ENCODE measurements at regions of chr16 and their contacts with region 1.

Region 1: DNA sequence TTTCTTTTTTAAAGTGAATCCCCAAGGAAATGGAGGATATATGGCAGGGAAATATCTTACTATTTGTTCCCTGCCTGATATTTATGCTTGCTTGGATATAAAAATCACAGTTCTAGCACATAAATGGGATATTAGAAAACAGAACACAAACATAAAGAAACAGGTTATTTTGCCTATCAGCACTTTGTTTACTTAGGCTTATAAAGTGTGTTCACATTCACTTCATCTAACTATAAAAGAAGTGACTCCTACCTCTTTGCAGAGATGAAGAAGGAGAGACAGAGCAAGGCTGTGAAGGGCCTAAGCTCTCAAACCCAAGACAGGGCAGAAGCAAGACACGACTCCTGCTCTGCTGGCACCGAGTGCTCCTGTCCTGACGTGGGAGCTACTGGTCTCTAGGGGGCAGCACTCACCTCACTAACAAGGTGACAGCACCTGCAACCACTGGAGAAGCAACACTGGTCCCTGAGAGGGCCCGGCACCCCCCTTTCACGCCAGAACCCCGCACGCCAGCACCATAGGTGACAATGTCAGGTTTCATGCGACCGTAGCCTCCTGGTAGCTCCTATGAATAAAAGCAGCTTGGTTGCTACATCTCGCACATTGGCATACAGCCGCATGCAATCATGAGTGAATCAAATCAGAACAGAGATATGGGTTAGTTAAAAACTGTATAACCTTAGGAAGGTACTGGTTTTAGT is 32.0 kb downstream of the MBTPS1 start:
- DNase-seq: peak; percentile 53
- H3K4me3 Mint-ChIP-seq: no peak overlapping the region
- H3K27ac Mint-ChIP-seq: no peak overlapping the region
- H3K4me1 Mint-ChIP-seq: peaks cover 43% of the 10 kb centered on the region
- H3K27me3 Mint-ChIP-seq: no peaks in the 10 kb centered on the region

Region 2: GRCh38 chr16:84098936-84099335 is 14.2 kb after region 1 on chr16:
- intact Hi-C with region 1: loop called (anchors 1 kb)
- DNase-seq: no peak
- H3K4me3 Mint-ChIP-seq: no peak overlapping the region
- H3K27ac Mint-ChIP-seq: no peak overlapping the region
- H3K4me1 Mint-ChIP-seq: peaks cover 15% of the 10 kb centered on the region
- H3K27me3 Mint-ChIP-seq: no peaks in the 10 kb centered on the region

Region 3: DNA sequence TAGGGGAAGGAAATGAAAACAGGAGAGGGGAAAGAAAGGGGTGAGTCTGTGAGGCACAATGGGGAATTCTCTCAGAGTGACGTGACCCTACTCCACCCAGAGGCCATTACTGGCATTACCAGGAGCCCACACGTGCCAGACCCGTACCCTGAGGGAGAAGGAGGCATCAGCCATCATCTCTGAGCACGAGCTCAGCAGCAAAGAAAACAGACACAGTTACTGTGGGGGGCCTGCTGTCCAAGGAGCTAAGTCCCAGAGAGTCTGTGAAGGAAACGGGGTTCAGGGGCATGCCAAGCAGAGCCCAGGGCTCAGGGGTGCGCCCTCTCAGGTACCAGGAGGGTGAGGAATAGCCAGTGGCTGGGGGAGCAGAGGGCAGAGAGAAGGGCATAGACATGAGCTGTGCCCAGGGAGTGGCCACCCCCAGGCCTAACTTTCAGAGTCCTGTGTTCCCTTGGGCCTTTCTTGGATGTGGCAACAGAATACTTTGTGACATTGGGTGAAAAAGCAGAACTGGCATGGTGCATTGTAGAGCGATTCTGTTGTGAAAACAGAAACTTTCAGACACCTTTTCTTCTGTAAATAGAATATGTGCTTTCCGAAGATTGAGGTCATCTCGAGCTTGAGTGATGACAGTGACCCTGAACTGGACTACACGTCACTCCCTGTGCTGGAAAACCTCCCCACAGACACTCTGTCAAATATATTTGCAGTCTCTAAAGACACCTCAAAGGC is 90.8 kb after region 1 on chr16:
- intact Hi-C with region 1: loop called (anchors 1 kb)
- DNase-seq: peak; percentile 32
- H3K4me3 Mint-ChIP-seq: no peak overlapping the region
- H3K27ac Mint-ChIP-seq: no peak overlapping the region
- H3K4me1 Mint-ChIP-seq: peaks cover 6% of the 10 kb centered on the region
- H3K27me3 Mint-ChIP-seq: no peaks in the 10 kb centered on the region

Region 4: GRCh38 chr16:84186685-84187437 is 102.1 kb after region 1 on chr16 and contains the start of gene TAF1C:
- intact Hi-C with region 1: loop called (anchors 1 kb)
- DNase-seq: peak; percentile 86
- H3K4me3 Mint-ChIP-seq: peak within 1 kb of the TSS; percentile 95
- H3K27ac Mint-ChIP-seq: peak within 1 kb of the TSS; percentile 89
- H3K4me1 Mint-ChIP-seq: peaks cover 6% of the 10 kb centered on the region
- H3K27me3 Mint-ChIP-seq: no peaks in the 10 kb centered on the region
- total RNA-seq, gene TAF1C: 67.9 and 74.4 TPM in 2 replicates

Measured in activated T-helper 1 cell treated with anti-CD3 and anti-CD28 coated beads, Interleukin-12 subunit alpha, Interleukin-12 subunit beta, Interleukin-2, Interleukin-4 antibody, amounts not matched to agents 30 ng/mL and 10 ng/mL and 1 ng/mL, durations not matched to agents 14 hours and 24 hours and 36 hours (primary cell).